ENCODE measurements at regions of chr6 and their contacts with region 1.

Region 1: DNA sequence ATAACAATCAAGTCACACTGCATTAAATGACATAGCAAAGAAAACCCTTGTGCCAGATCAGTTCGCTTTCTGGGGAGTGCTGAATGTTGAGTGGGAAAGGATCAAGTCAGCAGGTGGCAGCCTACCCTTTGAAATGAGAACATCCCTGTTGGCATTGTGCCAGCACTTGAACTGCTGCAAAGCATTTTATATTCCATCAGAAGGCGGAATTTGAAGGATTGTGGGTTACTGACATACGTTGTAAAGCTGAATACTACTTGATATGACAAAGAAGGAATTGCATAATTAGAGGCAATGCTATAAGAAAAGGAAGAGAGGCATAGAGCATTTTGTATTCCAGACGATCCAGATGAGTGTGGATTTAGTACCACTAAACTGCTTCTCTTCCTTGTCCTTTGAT is 26.5 kb downstream of the BCKDHB start:
- DNase-seq: peak; percentile 59
- ATAC-seq: no peak
- H3K4me3 Mint-ChIP-seq: no peak overlapping the region
- H3K27ac Mint-ChIP-seq: no peak overlapping the region
- H3K4me1 Mint-ChIP-seq: no peaks in the 10 kb centered on the region
- H3K27me3 Mint-ChIP-seq: no peaks in the 10 kb centered on the region

Region 2: DNA sequence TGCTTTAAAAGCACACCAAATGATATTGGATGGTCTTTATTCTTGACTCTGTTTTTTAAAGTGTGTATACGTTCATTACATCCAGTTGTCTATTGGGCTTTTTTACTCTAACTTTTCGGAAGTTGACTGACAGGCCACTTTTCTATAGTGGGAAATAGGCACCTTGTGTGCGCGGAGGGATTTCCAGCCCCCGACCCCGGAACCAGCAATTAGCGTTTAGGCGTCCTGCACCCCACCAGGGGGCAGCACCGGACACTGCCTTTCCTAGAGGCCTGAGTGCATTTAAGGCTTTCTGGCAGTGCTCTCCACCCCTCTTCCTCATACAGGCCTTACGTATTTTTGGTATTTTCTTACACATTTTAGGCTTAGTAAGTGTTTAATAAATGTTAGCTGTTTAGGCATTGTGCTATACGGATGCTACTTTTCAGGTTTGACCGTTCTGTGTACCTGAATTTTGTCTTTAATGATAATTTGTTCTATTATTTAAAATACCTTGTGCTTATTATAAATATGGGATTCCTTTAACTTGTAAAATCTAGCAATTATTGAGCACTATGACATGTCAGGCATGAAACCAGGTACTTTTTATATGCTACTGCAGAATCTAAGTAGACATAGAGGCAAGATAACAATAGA is 205.3 kb after region 1 on chr6:
- CTCF ChIA-PET with region 1: no interaction called
- POLR2A ChIA-PET with region 1: no interaction called
- intact Hi-C with region 1: loop called in 1 of 2 experiments (anchors 5 kb)
- DNase-seq: peak; percentile 83
- ATAC-seq: peak; percentile 66
- H3K4me3 Mint-ChIP-seq: no peak overlapping the region
- H3K27ac Mint-ChIP-seq: no peak overlapping the region
- H3K4me1 Mint-ChIP-seq: no peaks in the 10 kb centered on the region
- H3K27me3 Mint-ChIP-seq: no peaks in the 10 kb centered on the region

Measured in activated CD4-positive, alpha-beta T cell treated with anti-CD3 and anti-CD28 coated beads for 36 hours (primary cell).